ENCODE measurements at regions of chr2 and their contacts with region 1.

Region 1: DNA sequence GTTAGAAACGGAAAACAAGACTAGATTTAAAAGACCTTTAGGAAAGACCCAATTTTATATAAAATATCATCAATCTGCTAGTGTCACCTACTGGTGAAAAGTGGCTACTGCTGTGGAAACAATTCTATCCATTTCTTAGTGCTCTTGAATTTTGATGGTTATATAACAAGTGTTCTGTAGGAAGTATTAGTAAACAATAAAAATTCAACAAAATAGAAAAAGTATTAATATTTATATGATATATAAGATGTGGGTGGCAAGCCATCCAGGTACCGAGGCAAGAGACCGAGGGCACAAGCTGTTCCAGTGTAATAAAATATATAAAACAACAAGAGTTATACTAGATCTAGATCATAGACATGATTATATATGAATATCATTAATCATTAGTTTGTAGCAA is 6.2 kb upstream of the TMEM87B start:
- DNase-seq: peak; percentile 20
- H3K4me3 ChIP-seq: no peak overlapping the region
- H3K27ac ChIP-seq: no peak overlapping the region
- H3K4me1 ChIP-seq: peaks cover 11 to 50% (median 21%) of the 10 kb centered on the region in 4 donors
- H3K27me3 ChIP-seq: no peaks in the 10 kb centered on the region
- CTCF ChIP-seq: peak; percentile 77 to 91 (median 84)
- EP300 ChIP-seq: no peak
- POLR2A ChIP-seq: no peak

Region 2: DNA sequence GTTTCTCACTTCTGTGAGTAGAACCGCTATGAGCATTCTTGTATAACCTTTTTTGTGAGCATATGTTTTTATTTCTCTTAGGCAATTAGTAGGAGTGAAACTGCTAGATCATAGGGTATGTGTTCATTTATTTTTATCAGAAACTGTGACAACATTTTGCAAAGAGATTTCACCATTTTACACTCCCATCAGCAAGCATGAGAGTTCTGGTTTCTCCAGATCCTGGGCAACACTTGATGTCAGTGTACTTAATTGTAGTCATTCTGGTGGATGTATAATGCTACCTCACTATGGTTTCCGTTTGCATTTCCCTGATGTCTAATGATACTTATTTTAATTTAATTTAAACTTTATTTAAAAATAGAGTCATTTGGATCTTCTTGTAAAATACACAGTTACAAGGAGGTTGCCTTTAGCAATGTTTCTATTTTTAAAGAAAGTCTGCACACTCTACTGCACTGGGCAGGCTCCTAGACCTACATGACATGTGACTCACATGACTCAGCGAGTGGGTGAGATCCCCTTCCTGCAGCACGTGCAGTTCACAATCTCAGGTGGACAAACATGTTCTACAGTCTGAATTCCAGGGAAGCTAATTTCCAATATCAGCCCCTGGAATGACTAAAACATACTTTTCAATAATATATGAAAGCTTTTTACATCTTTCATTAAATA is 1055.2 kb before region 1 on chr2:
- in situ Hi-C with region 1: no loop called
- intact Hi-C with region 1: no loop called
- DNase-seq: no peak
- H3K4me3 ChIP-seq: no peak overlapping the region
- H3K27ac ChIP-seq: no peak overlapping the region
- H3K4me1 ChIP-seq: peaks cover 0 to 24% (median 7%) of the 10 kb centered on the region in 4 donors
- H3K27me3 ChIP-seq: no peaks in the 10 kb centered on the region
- CTCF ChIP-seq: no peak
- EP300 ChIP-seq: no peak
- POLR2A ChIP-seq: no peak

Region 3: DNA sequence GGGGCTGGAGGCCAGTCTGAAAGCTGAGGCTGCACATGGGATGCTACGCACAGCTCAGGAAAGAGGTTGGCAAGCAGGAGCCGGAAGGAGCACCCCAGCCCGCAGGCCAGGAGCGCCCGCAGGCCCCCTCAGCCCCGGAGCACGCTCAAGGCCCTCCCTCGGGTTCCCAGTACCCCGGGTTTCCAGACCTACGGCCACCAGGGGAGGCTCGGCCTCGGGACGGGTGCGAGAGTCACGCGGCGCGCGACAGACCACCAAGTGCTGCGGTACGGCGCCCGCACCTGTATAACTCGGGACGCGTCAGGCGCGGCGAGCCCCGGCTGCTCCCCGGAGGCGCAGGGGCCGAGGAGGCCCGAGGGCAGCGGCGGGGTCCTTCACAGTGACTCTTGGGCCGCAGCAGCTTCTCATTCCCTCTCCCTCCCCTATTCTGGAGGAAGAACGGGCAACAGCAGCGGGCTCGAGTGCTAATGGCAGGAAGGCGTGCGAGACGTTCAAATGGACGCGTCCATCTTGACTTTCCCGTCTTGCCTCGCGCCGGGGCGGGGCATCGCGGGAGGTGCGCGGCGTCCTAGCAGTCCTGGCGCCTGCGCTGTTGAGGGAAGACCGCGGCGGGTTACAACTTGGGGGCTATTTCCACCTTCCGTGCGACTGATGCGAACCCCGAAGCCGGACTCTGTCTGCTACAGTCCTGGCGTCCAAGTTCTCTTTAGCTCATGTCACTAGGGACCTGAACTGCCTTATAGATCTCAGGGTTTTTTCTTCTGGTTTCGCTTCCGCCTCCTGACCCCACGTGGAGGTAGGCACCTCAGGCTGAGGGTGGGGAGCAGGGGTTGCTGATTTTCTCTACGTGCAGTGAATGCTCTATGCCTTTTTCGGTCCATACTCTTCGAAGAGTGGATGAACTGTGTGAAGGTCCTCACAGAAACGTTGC is 165.0 kb before region 1 on chr2 and contains the start of gene ANAPC1:
- in situ Hi-C with region 1: loop called in 1 of 4 experiments (anchors 10 kb)
- intact Hi-C with region 1: no loop called
- DNase-seq: peak; percentile 86
- H3K4me3 ChIP-seq: peak within 1 kb of the TSS; percentile 63 to 100 (median 81)
- H3K27ac ChIP-seq: peak within 1 kb of the TSS; percentile 84 to 92 (median 86)
- H3K4me1 ChIP-seq: peaks cover 0 to 20% (median 7%) of the 10 kb centered on the region in 4 donors
- H3K27me3 ChIP-seq: no peaks in the 10 kb centered on the region
- CTCF ChIP-seq: peak in 1 of 5 experiments; percentile 22
- EP300 ChIP-seq: no peak
- POLR2A ChIP-seq: peak; percentile 56
- total RNA-seq, gene ANAPC1: 37.3 to 67.3 (median 51.4) TPM

Region 4: DNA sequence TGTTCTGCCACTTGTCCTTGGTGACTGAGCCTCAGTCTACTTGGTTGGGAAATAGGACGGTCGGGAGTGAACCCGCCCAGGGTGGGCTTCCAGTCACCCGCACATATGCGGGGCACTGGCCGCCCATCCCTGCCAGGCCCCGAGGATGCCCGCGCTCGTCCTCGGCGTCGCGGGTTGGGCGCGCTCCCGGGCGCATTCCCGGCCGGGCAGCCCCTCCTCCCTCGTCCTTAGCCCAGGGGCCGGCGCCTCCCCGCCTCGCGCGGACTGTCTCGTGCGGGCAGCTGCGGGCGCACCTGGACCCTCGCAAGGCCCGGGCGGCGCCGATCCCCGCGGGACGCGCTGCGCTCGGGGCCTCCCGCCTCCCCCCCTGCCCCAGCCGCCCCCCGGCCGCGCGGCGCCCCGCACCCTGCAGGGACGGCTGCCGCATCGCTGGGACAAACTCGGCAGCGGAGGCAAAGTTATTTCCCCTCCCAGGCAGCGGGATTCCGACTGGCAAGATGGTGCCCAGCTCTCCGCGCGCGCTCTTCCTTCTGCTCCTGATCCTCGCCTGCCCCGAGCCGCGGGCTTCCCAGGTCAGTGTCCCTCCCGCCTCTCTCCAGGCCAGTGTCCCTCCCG is 89.4 kb after region 1 on chr2 and contains the start of gene FBLN7:
- in situ Hi-C with region 1: no loop called
- intact Hi-C with region 1: no loop called
- DNase-seq: no peak
- H3K4me3 ChIP-seq: peak within 1 kb of the TSS; percentile 16 to 53 (median 46)
- H3K27ac ChIP-seq: no peak within 1 kb of the TSS
- H3K4me1 ChIP-seq: peaks cover 0 to 10% (median 7%) of the 10 kb centered on the region in 4 donors
- H3K27me3 ChIP-seq: peaks cover 29% of the 10 kb centered on the region
- CTCF ChIP-seq: no peak
- EP300 ChIP-seq: no peak
- POLR2A ChIP-seq: no peak
- total RNA-seq, gene FBLN7: 1.2 to 2.9 TPM in 2 of 4 donors, not detected in the others